Activated T-helper 1 cell treated with anti-CD3 and anti-CD28 coated beads, Interleukin-12 subunit alpha, Interleukin-12 subunit beta, Interleukin-2, Interleukin-4 antibody, amounts not matched to agents 30 ng/mL and 10 ng/mL and 1 ng/mL, durations not matched to agents 14 hours and 24 hours and 36 hours (primary cell): ENCODE measurements at regions of chr16 and their contacts with region 1.

Region 1: DNA sequence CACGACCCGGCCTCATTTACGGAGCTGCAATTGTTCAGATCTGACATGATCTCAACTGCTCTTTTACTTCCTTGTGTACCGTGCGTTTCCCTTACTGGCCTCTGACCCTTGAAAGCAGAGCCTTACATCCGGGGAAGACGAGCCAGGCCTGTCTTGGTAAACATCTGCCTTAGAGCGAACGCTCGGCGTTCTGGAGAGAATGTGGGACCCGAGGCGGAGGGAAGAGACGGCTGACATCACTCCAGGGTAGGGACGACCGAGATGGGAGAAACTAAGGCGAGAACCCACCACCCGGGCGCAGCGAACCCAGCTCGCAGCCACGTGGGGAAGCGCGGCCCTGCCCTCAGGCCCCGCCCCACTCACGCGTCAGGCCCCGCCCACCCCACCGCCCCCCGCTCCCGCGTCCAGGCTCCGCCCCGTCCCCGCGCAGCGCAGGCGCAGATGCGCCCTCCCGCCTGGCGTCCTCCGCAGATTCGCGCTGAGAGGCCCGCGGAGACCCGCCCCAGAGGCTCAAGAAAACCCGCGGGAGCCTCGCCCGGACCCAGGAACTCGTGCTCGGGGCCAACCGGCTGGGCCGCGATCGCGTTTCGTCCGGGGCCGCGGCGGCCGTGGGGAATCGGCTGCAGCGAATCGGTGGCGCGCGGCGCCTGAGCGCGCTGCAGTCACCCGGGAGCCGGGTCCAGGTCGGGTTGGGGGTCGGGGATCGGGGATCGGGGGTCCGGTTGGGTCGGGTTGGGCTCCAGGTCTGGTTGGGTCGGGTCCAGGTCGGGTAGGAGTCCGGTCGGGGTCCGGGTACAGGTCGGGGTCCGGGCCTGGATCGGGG is at the start of gene TELO2:
- DNase-seq: peak; percentile 85
- H3K4me3 Mint-ChIP-seq: peak within 1 kb of the TSS; percentile 92
- H3K27ac Mint-ChIP-seq: peak within 1 kb of the TSS; percentile 98
- H3K4me1 Mint-ChIP-seq: peaks cover 8% of the 10 kb centered on the region
- H3K27me3 Mint-ChIP-seq: no peaks in the 10 kb centered on the region
- total RNA-seq, gene TELO2: 94.1 and 95.3 TPM in 2 replicates

Region 2: GRCh38 chr16:1543085-1543896 is 50.2 kb after region 1 on chr16:
- intact Hi-C with region 1: loop called (anchors 1 kb)
- DNase-seq: peak; percentile 38
- H3K4me3 Mint-ChIP-seq: peak overlapping the region; percentile 70
- H3K27ac Mint-ChIP-seq: peak overlapping the region; percentile 91
- H3K4me1 Mint-ChIP-seq: peaks cover 34% of the 10 kb centered on the region
- H3K27me3 Mint-ChIP-seq: no peaks in the 10 kb centered on the region